ENCODE measurements at regions of chr4 and their contacts with region 1.

Region 1: DNA sequence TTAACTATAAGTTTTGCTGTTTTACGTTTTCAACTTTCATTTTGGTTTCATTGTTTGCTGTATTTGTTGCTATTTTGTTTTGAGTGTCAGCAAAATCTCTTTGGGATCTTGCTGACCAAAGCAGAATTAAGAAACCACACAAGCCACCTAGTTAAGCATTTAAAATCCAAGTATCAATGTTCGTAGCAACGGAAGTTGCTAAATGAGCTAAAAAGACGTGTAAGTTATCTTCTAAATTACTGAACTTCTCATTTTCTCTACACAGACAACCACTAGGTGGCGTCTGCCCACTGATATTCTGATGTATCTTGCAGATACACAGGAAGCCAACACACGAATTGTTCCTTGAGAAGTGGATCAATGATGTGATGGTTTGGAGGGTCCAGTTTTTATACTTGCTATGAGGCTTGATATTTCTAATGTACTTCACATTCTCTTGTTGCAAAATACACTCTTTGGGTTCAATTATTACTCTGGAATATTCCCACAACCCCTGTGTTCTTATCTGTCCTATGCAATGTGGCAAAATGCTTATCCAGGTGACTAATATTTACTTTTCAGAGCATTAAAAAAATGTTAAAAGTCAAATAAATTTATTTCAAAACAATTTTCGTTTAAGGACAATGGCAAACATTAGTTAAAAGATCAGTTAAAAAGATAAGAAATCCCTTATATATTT is 250.5 kb downstream of the TECRL start:
- DNase-seq: no peak
- ATAC-seq: no peak

Region 2: GRCh38 chr4:64079316-64079715 is 79.5 kb before region 1 on chr4:
- intact Hi-C with region 1: no loop called
- DNase-seq: no peak
- ATAC-seq: no peak

Region 3: GRCh38 chr4:64539234-64539849 is 380.6 kb after region 1 on chr4:
- intact Hi-C with region 1: loop called (anchors 5 kb)
- DNase-seq: no peak
- ATAC-seq: peak; percentile 76

Region 4: GRCh38 chr4:64584981-64585557 is 426.3 kb after region 1 on chr4:
- intact Hi-C with region 1: loop called (anchors 5 kb)
- DNase-seq: no peak
- ATAC-seq: no peak

Measured in Right ventricle myocardium inferior (tissue), 1 donor.